Left ventricle myocardium superior (tissue), 1 donor: ENCODE measurements at regions of chr5 and their contacts with region 1.

Region 1: DNA sequence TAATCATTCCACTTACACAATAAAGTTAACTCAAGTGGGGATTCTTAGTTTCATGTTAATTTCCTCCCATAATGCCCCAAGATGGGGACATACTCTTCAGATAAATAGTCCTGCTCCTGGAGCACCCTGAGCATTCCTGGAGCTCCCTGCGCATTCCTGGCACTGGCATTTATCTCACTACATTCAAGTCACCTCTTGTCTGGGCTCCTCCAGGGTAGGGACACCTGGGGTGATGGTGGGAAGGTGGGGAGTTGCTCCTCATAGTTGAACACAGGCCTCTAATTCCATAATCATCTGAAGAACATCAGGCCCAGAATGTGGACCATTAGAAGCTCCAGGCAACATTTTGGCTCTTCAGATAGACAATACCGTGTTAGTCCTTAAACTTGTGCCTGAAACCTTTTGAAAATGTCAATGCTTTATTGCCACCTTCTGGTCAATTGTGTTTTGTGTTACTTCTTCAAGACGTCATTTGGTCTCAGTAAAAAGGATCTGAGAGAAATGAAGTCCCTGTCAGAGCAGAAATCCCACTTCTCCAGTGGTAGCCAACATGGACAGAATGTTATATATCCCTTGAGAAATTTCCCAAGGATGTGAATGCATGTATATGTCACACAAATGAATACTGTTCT is 14.2 kb upstream of the AGGF1 start:
- DNase-seq: no peak
- ATAC-seq: peak; percentile 45

Region 2: GRCh38 chr5:76805850-76806505 is 210.1 kb before region 1 on chr5:
- intact Hi-C with region 1: no loop called
- DNase-seq: no peak
- ATAC-seq: peak; percentile 44

Region 3: DNA sequence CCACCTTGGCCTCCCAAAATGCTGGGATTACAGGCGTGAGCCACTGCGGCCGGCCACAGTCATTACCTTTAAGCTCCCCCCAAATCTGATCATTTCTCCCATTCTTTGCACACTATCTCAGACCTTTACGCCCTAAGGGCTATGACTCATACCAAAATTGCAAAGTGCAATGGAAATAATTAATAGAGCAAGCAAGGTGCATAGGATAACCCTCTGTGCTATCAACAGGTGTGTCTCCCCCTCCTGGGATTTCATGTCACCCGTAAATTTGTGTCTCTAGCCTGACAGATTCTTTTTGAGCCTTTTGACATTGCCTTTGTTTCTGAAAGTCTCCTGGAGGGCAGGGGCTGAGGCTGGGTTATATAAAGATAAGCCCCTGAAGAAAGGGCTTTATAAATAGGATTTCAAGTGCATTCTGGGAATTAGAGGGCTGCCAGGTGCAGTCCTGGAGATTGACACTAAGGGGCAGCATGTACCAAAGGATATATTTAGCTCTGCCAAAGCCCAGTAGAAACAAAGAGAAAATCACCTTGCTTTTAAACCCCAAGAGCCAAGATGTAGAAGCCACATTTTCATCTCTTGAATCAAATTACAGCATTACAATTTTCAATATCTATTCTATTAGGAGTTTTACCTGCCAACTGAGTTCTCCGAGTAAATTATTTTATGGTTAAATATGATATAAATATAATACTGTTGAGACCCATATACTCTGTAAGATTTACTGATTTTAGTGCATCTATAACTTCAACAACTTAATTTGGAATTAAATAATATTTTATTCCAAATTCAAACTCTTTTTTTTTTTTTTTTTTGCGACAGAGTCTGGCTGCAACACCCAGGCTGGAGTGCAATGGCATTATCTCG is 148.0 kb before region 1 on chr5:
- intact Hi-C with region 1: loop called (anchors 2 kb)
- DNase-seq: peak; percentile 63
- ATAC-seq: peak; percentile 95